T-cell (primary cell): ENCODE measurements at regions of chr1 and their contacts with region 1.

Region 1: GRCh38 chr1:24391882-24392603 is 21.5 kb downstream of the STPG1 start:
- DNase-seq: peak in 30 of 35 experiments; percentile 12 to 77 (median 48)
- ATAC-seq: peak; percentile 67 to 75 (median 72)
- H3K4me3 ChIP-seq: peak overlapping the region in 1 of 2 donors; percentile 20
- H3K4me3 Mint-ChIP-seq: peak overlapping the region; percentile 68 to 83 (median 77)
- H3K27ac ChIP-seq: peak overlapping the region; percentile 93
- H3K27ac Mint-ChIP-seq: peak overlapping the region; percentile 96 to 98
- H3K4me1 ChIP-seq: peaks cover 11 to 22% of the 10 kb centered on the region in 2 experiments
- H3K4me1 Mint-ChIP-seq: peaks cover 29 to 36% (median 30%) of the 10 kb centered on the region in 3 donors
- H3K27me3 ChIP-seq: no peaks in the 10 kb centered on the region
- H3K27me3 Mint-ChIP-seq: no peaks in the 10 kb centered on the region

Region 2: DNA sequence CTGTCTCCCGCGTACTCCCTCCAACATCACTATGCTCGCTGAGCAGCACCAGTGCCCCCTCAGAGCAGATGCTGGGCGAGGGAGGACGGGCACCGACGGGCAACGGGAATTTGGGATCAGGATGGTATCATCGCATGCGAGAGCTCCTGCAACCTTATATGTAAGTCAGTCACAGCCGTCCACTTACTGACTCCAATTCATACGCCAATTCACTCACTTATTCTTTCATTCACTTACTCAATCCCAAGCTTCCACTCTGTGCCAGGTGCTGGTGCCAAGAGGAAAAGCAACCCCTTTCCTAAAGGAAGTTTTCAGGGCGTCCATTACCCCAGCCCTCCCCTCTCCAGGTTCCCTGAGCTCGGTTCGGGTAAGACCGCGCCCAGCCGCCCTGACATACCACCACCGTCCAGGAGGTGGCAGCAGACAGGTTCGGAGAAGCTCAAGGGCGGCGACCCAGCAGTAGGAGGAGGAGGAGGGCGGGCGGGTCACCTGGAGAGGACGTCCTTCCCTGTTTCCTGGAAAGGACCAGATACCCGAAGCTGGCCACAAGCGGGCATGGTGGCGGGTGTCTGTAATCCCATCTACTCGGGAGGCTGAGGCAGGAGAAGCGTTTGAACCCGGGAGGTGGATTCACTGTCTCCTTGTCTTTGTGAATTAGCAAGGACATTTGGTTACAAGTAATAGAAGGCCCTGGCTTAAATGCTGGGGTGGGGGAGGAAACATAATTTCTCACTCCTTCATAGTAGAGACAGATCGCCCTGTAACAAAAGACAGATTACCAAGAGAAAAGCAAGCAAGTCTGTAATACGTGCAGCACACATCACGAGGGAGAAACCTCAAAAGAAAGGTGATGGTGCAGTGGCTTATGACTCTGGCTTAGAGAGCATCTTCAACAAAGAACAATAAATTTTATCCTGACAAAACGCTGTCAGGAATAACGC is 241.5 kb before region 1 on chr1:
- CTCF ChIA-PET with region 1: interaction called in 1 of 2 experiments, 55 read pairs
- POLR2A ChIA-PET with region 1: interaction called in 1 of 2 experiments, 9 read pairs
- DNase-seq: peak; percentile 60 to 89 (median 82)
- ATAC-seq: peak; percentile 93 to 96 (median 95)
- H3K4me3 ChIP-seq: peak overlapping the region; percentile 31 to 54
- H3K4me3 Mint-ChIP-seq: peak overlapping the region; percentile 50 to 53 (median 52)
- H3K27ac ChIP-seq: no peak overlapping the region
- H3K27ac Mint-ChIP-seq: no peak overlapping the region
- H3K4me1 ChIP-seq: peaks cover 4 to 10% of the 10 kb centered on the region in 2 experiments
- H3K4me1 Mint-ChIP-seq: peaks cover 6 to 18% (median 15%) of the 10 kb centered on the region in 3 donors
- H3K27me3 ChIP-seq: peaks cover 20 to 45% of the 10 kb centered on the region in 2 experiments
- H3K27me3 Mint-ChIP-seq: peaks cover 20 to 43% of the 10 kb centered on the region in 2 donors

Region 3: DNA sequence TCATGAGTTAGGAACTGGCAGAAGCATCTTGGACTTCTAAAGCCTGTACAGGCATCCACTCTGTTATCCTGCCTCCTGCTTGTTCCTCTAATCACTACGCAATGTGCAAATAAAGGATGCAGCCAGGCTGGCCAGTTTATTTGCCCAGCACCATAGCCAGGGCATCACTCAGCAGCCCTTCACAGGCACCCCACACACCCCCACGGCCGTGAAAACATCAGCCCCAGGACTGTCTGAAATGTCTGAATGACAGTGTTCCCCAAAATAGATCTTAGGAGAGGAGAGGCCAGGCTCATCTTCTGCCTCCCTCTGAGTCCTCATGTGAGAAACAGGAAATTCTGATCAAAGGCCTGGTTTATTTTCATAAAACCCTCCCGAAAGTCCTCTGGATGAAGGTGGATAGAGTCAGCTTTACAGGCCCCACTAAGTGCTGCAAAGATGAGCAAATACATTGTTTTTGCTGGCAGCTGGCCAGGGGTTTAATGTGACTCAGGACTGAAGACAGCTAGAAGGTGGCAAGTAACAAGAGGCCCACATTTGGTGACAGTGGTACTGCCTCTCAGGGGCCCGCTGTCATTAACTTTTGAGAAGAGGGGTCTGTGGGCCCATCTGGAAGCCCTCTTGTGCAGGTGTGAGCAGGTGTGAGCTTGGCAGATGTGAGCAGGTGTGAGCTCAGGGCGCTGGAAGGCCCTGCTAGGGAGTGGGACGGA is 40.0 kb before region 1 on chr1:
- CTCF ChIA-PET with region 1: no interaction called
- POLR2A ChIA-PET with region 1: no interaction called
- DNase-seq: peak in 1 of 35 experiments; percentile 6
- ATAC-seq: no peak
- H3K4me3 ChIP-seq: no peak overlapping the region
- H3K4me3 Mint-ChIP-seq: no peak overlapping the region
- H3K27ac ChIP-seq: no peak overlapping the region
- H3K27ac Mint-ChIP-seq: peak overlapping the region in 1 of 2 donors; percentile 67
- H3K4me1 ChIP-seq: peaks cover 0 to 3% of the 10 kb centered on the region in 2 experiments
- H3K4me1 Mint-ChIP-seq: peaks cover 14 to 24% (median 20%) of the 10 kb centered on the region in 3 donors
- H3K27me3 ChIP-seq: peaks cover 0 to 6% of the 10 kb centered on the region in 2 experiments
- H3K27me3 Mint-ChIP-seq: no peaks in the 10 kb centered on the region

Region 4: DNA sequence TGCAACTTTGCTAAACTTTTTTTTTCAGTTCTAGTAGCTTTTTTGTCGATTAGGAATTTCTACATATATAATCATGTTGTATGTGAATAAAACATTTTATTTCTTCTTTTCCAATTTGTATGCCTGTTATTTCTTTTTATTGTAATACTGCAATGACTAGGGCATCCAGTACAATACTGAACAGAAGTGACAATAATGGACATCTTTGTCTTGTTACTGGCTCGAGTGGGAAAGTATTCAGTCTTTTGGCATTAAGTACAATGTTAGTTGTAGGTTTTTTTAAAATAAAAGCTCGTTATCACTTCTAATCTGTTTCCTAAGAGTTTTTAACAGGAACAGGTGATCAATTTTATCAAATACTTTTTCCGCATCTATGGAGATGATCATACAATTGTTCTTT is 11.8 kb after region 1 on chr1:
- CTCF ChIA-PET with region 1: interaction called, 4 to 12 read pairs
- POLR2A ChIA-PET with region 1: no interaction called
- DNase-seq: no peak
- ATAC-seq: no peak
- H3K4me3 ChIP-seq: no peak overlapping the region
- H3K4me3 Mint-ChIP-seq: no peak overlapping the region
- H3K27ac ChIP-seq: no peak overlapping the region
- H3K27ac Mint-ChIP-seq: no peak overlapping the region
- H3K4me1 ChIP-seq: no peaks in the 10 kb centered on the region
- H3K4me1 Mint-ChIP-seq: no peaks in the 10 kb centered on the region
- H3K27me3 ChIP-seq: no peaks in the 10 kb centered on the region
- H3K27me3 Mint-ChIP-seq: no peaks in the 10 kb centered on the region

Region 5: GRCh38 chr1:24526940-24527542 is 135.0 kb after region 1 on chr1:
- CTCF ChIA-PET with region 1: interaction called, 3 to 12 read pairs
- POLR2A ChIA-PET with region 1: no interaction called
- DNase-seq: peak in 30 of 35 experiments; percentile 19 to 71 (median 46)
- ATAC-seq: peak in 3 of 4 experiments; percentile 58 to 72 (median 68)
- H3K4me3 ChIP-seq: no peak overlapping the region
- H3K4me3 Mint-ChIP-seq: no peak overlapping the region
- H3K27ac ChIP-seq: peak overlapping the region; percentile 2
- H3K27ac Mint-ChIP-seq: peak overlapping the region; percentile 68 to 86
- H3K4me1 ChIP-seq: peaks cover 18 to 27% of the 10 kb centered on the region in 2 experiments
- H3K4me1 Mint-ChIP-seq: peaks cover 69 to 75% (median 72%) of the 10 kb centered on the region in 3 donors
- H3K27me3 ChIP-seq: no peaks in the 10 kb centered on the region
- H3K27me3 Mint-ChIP-seq: no peaks in the 10 kb centered on the region

Region 6: GRCh38 chr1:24830680-24831272 is 438.7 kb after region 1 on chr1:
- CTCF ChIA-PET with region 1: interaction called in 1 of 2 experiments, 10 read pairs
- POLR2A ChIA-PET with region 1: no interaction called
- DNase-seq: peak in 1 of 35 experiments; percentile 74
- ATAC-seq: peak in 2 of 4 experiments; percentile 54 to 63
- H3K4me3 ChIP-seq: no peak overlapping the region
- H3K4me3 Mint-ChIP-seq: no peak overlapping the region
- H3K27ac ChIP-seq: no peak overlapping the region
- H3K27ac Mint-ChIP-seq: no peak overlapping the region
- H3K4me1 ChIP-seq: no peaks in the 10 kb centered on the region
- H3K4me1 Mint-ChIP-seq: no peaks in the 10 kb centered on the region
- H3K27me3 ChIP-seq: no peaks in the 10 kb centered on the region
- H3K27me3 Mint-ChIP-seq: peaks cover 2 to 10% of the 10 kb centered on the region in 2 donors